ENCODE measurements at regions of chr17 and their contacts with region 1.

Region 1: GRCh38 chr17:41322094-41322902 is 6.8 kb upstream of the KRTAP17-1 start:
- DNase-seq: peak in 7 of 9 donors; percentile 50 to 75 (median 60)
- ATAC-seq: peak; percentile 81
- H3K4me3 ChIP-seq: no peak overlapping the region
- H3K4me3 Mint-ChIP-seq: peak overlapping the region in 2 of 10 donors; percentile 25 to 27
- H3K27ac ChIP-seq: no peak overlapping the region
- H3K27ac Mint-ChIP-seq: peak overlapping the region; percentile 34 to 87 (median 77)
- H3K4me1 ChIP-seq: peaks cover 26 to 44% of the 10 kb centered on the region in 2 donors
- H3K4me1 Mint-ChIP-seq: peaks cover 11 to 59% (median 50%) of the 10 kb centered on the region in 7 donors
- H3K27me3 ChIP-seq: no peaks in the 10 kb centered on the region
- H3K27me3 Mint-ChIP-seq: no peaks in the 10 kb centered on the region

Region 2: GRCh38 chr17:40854159-40854814 is 468.0 kb before region 1 on chr17:
- CTCF ChIA-PET with region 1: interaction called, 6 read pairs
- POLR2A ChIA-PET with region 1: no interaction called
- intact Hi-C with region 1: loop called (anchors 1 to 2 kb)
- DNase-seq: no peak
- ATAC-seq: no peak
- H3K4me3 ChIP-seq: no peak overlapping the region
- H3K4me3 Mint-ChIP-seq: no peak overlapping the region
- H3K27ac ChIP-seq: no peak overlapping the region
- H3K27ac Mint-ChIP-seq: no peak overlapping the region
- H3K4me1 ChIP-seq: no peaks in the 10 kb centered on the region
- H3K4me1 Mint-ChIP-seq: peaks cover 0 to 6% (median 0%) of the 10 kb centered on the region in 7 donors
- H3K27me3 ChIP-seq: no peaks in the 10 kb centered on the region
- H3K27me3 Mint-ChIP-seq: peaks cover 19 to 53% (median 27%) of the 10 kb centered on the region in 5 donors

Region 3: GRCh38 chr17:40978575-40979151 is 343.6 kb before region 1 on chr17:
- CTCF ChIA-PET with region 1: no interaction called
- POLR2A ChIA-PET with region 1: no interaction called
- intact Hi-C with region 1: no loop called
- DNase-seq: no peak
- ATAC-seq: no peak
- H3K4me3 ChIP-seq: no peak overlapping the region
- H3K4me3 Mint-ChIP-seq: no peak overlapping the region
- H3K27ac ChIP-seq: no peak overlapping the region
- H3K27ac Mint-ChIP-seq: no peak overlapping the region
- H3K4me1 ChIP-seq: no peaks in the 10 kb centered on the region
- H3K4me1 Mint-ChIP-seq: no peaks in the 10 kb centered on the region
- H3K27me3 ChIP-seq: no peaks in the 10 kb centered on the region
- H3K27me3 Mint-ChIP-seq: peaks cover 14 to 25% (median 21%) of the 10 kb centered on the region in 5 donors

Region 4: GRCh38 chr17:41098476-41098875 is 223.8 kb before region 1 on chr17:
- CTCF ChIA-PET with region 1: interaction called, 3 read pairs
- POLR2A ChIA-PET with region 1: no interaction called
- intact Hi-C with region 1: loop called in 1 of 2 experiments (anchors 1 kb)
- DNase-seq: no peak
- ATAC-seq: no peak
- H3K4me3 ChIP-seq: no peak overlapping the region
- H3K4me3 Mint-ChIP-seq: no peak overlapping the region
- H3K27ac ChIP-seq: no peak overlapping the region
- H3K27ac Mint-ChIP-seq: no peak overlapping the region
- H3K4me1 ChIP-seq: no peaks in the 10 kb centered on the region
- H3K4me1 Mint-ChIP-seq: peaks cover 0 to 27% (median 15%) of the 10 kb centered on the region in 7 donors
- H3K27me3 ChIP-seq: no peaks in the 10 kb centered on the region
- H3K27me3 Mint-ChIP-seq: peaks cover 10 to 15% (median 11%) of the 10 kb centered on the region in 5 donors

Region 5: GRCh38 chr17:41211845-41212466 is 110.3 kb before region 1 on chr17:
- CTCF ChIA-PET with region 1: interaction called, 3 read pairs
- POLR2A ChIA-PET with region 1: no interaction called
- intact Hi-C with region 1: loop called in 1 of 2 experiments (anchors 5 kb)
- DNase-seq: peak in 1 of 9 donors; percentile 1
- ATAC-seq: no peak
- H3K4me3 ChIP-seq: no peak overlapping the region
- H3K4me3 Mint-ChIP-seq: no peak overlapping the region
- H3K27ac ChIP-seq: no peak overlapping the region
- H3K27ac Mint-ChIP-seq: no peak overlapping the region
- H3K4me1 ChIP-seq: no peaks in the 10 kb centered on the region
- H3K4me1 Mint-ChIP-seq: peaks cover 0 to 13% (median 6%) of the 10 kb centered on the region in 7 donors
- H3K27me3 ChIP-seq: peaks cover 0 to 5% of the 10 kb centered on the region in 2 donors
- H3K27me3 Mint-ChIP-seq: peaks cover 0 to 30% (median 12%) of the 10 kb centered on the region in 5 donors

Region 6: DNA sequence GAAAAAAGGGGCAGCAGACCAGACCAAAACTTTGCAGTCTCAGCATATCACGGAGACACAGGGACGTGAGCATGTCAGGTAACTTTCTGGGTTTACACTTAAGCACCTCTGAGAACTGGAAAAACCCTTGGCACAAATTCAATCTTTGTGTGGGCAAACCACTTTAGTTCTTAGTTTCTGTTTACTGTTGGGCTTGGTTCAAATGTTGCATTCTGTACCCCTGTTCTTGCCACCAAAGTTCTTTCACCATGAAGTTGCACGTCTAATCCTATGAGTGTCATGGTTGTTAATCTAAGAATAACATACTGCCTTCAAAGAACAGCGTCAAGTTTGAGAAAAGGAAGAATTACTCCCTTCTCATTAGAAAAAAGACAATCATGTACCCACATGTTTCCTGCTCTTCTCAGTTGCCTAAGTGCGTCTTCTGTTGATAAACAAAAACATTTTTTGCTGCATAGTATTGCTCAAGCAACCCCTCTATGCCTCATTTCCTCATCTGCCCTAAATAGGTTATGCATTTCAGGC is 16.7 kb after region 1 on chr17:
- CTCF ChIA-PET with region 1: interaction called, 22 read pairs
- POLR2A ChIA-PET with region 1: interaction called, 6 read pairs
- intact Hi-C with region 1: loop called (anchors 1 to 2 kb)
- DNase-seq: peak in 7 of 9 donors; percentile 71 to 93 (median 88)
- ATAC-seq: peak; percentile 90
- H3K4me3 ChIP-seq: no peak overlapping the region
- H3K4me3 Mint-ChIP-seq: peak overlapping the region; percentile 28 to 81 (median 74)
- H3K27ac ChIP-seq: peak overlapping the region; percentile 87
- H3K27ac Mint-ChIP-seq: peak overlapping the region; percentile 92 to 99 (median 96)
- H3K4me1 ChIP-seq: peaks cover 78 to 85% of the 10 kb centered on the region in 2 donors
- H3K4me1 Mint-ChIP-seq: peaks cover 47 to 99% (median 85%) of the 10 kb centered on the region in 7 donors
- H3K27me3 ChIP-seq: no peaks in the 10 kb centered on the region
- H3K27me3 Mint-ChIP-seq: peaks cover 0 to 14% (median 0%) of the 10 kb centered on the region in 5 donors

Region 7: DNA sequence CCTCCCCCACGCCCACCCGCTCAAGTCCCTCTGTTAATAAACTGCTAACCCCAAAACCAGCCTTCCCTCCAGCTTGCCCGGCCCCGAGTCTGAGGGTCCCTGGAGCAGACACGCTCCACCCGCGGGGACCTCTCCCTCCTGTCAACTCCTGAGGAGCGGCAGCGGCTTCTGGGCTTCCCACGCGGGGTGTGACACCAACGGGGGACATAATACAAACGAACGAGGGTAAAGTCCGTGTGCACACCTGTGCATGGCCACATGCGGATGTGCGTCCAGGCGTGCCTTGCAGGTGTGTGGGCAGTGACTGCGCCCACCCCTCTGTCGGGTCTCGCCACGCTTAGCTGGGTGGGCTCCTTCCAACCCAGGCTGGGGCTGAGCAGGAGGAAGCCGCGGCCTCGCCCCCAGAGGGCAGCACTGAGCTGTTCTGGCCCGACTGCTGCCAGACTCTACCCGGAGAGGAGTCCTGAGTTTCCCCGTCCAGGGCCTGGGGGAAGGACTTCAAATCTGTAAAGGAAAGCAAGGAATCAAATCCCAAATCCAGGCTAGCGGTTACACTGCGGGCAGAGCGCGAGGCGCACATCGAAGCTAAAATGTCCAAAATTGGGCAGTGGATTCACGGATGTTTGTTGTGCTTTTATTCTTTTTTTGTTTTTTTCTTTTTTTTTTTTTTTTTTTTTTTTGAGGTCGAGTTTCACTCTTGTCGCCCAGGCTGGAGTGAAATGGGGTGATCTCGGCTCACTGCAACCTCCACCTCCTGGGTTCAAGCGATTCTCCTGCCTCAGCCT is 326.3 kb after region 1 on chr17:
- CTCF ChIA-PET with region 1: interaction called, 13 read pairs
- POLR2A ChIA-PET with region 1: no interaction called
- intact Hi-C with region 1: loop called in 1 of 2 experiments (anchors 1 kb)
- DNase-seq: peak; percentile 70 to 93 (median 83)
- ATAC-seq: peak; percentile 93
- H3K4me3 ChIP-seq: peak overlapping the region; percentile 87
- H3K4me3 Mint-ChIP-seq: peak overlapping the region in 9 of 10 donors; percentile 63 to 86 (median 81)
- H3K27ac ChIP-seq: peak overlapping the region; percentile 24
- H3K27ac Mint-ChIP-seq: peak overlapping the region in 7 of 9 donors; percentile 28 to 82 (median 77)
- H3K4me1 ChIP-seq: peaks cover 8 to 12% of the 10 kb centered on the region in 2 donors
- H3K4me1 Mint-ChIP-seq: peaks cover 6 to 14% (median 9%) of the 10 kb centered on the region in 7 donors
- H3K27me3 ChIP-seq: no peaks in the 10 kb centered on the region
- H3K27me3 Mint-ChIP-seq: no peaks in the 10 kb centered on the region

Measured in naive thymus-derived CD4-positive, alpha-beta T cell (primary cell).